Caco-2 (cell line): ENCODE measurements at regions of chr2 and their contacts with region 1.

Region 1: DNA sequence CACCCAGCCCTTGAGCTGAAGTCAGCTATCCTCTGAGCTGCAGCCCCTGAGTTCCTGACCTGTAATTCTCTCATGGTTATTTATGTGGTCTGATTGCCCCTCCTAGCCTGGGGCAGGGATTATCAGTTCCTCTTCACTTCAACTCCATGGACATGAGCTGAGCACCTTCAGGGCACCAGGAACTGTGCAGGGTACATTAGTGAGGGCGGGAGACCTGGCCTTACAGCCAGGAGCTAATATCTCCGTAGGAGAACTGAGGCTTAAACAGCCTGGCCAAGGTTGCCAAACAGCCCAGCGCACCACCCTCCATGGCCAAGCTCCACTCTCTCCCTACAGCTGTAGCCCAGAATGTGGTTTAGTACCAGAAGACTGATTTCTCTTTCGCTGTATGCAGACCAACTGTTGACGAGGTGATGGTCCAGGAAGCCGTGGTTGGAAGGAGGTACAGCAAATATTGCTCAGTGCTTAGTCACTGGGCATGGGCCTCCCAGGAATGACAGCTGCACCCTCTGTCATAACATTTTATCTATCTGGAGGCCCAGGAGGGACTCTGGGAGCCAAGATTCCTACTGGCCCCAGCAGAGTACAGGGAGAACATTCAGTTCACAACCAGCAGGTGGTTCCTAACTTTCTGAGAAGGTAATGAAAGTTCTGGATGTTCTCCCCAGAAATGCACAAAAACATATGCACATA is 228.7 kb upstream of the SIX2 start:
- DNase-seq: peak; percentile 63 to 69
- H3K4me3 ChIP-seq: no peak overlapping the region
- H3K4me3 Mint-ChIP-seq: no peak overlapping the region
- H3K27ac Mint-ChIP-seq: peak overlapping the region; percentile 57
- H3K4me1 ChIP-seq: peaks cover 13% of the 10 kb centered on the region
- H3K4me1 Mint-ChIP-seq: peaks cover 8% of the 10 kb centered on the region
- H3K27me3 ChIP-seq: no peaks in the 10 kb centered on the region
- H3K27me3 Mint-ChIP-seq: no peaks in the 10 kb centered on the region
- CTCF ChIP-seq: peak in 1 of 2 experiments; percentile 42

Region 2: DNA sequence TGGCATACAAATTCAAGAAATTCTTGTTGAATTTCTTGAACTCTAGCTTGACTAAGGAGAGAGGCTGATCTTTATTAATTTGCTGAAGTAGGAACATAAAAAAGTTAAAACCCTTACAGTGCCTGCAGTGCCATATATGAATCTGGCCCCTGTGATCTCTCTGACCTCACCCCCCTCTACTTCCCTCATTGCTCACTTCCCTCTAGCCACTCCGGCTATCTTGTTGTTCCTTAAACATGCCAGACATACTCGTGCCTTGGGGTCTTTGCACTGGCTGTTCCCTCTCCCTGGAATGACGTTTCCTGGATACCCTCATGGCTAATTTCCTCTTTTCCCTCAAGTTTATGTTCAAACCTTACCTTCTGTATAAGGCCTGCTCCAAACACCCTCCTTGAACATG is 17.6 kb after region 1 on chr2:
- CTCF ChIA-PET with region 1: no interaction called
- POLR2A ChIA-PET with region 1: no interaction called
- intact Hi-C with region 1: no loop called
- DNase-seq: no peak
- H3K4me3 ChIP-seq: no peak overlapping the region
- H3K4me3 Mint-ChIP-seq: no peak overlapping the region
- H3K27ac Mint-ChIP-seq: no peak overlapping the region
- H3K4me1 ChIP-seq: peaks cover 7% of the 10 kb centered on the region
- H3K4me1 Mint-ChIP-seq: peaks cover 5% of the 10 kb centered on the region
- H3K27me3 ChIP-seq: no peaks in the 10 kb centered on the region
- H3K27me3 Mint-ChIP-seq: no peaks in the 10 kb centered on the region
- CTCF ChIP-seq: no peak

Region 3: GRCh38 chr2:45273412-45274249 is 35.6 kb after region 1 on chr2:
- CTCF ChIA-PET with region 1: no interaction called
- POLR2A ChIA-PET with region 1: no interaction called
- intact Hi-C with region 1: loop called (anchors 1 kb)
- DNase-seq: peak; percentile 52 to 75
- H3K4me3 ChIP-seq: no peak overlapping the region
- H3K4me3 Mint-ChIP-seq: peak overlapping the region; percentile 58
- H3K27ac Mint-ChIP-seq: peak overlapping the region; percentile 56
- H3K4me1 ChIP-seq: peaks cover 53% of the 10 kb centered on the region
- H3K4me1 Mint-ChIP-seq: peaks cover 31% of the 10 kb centered on the region
- H3K27me3 ChIP-seq: no peaks in the 10 kb centered on the region
- H3K27me3 Mint-ChIP-seq: no peaks in the 10 kb centered on the region
- CTCF ChIP-seq: no peak

Region 4: DNA sequence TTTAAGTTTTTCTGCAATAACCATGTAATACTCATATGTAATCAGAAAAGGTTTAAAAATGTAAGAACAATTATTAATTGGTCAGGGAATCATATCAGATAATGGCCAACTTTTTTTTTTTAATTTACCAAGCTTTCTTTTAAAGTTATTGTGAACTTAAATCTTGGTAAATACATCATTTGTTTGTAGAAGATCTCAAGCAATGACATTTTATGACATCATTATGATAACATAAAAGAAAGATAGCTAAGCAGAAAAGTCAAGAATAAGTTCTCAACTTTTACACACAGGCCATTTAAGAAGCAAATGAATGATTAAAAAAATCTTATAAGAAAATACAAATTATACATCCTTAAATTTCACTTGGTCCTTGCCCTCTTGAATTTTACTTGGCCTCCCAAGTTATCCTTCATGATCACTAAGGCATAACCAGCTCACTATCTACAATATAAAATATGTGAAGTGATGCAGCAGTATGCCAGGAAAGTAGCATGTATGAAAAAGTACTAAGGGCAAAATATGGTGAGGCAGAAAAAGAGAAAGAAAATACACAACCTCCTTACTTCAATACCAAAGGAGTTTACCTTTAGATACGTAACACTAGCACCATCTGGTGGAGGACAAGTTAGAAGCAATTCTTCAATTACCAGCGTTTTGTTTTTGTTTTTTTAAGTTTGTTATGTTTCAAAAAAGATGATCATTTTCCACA is 256.4 kb after region 1 on chr2:
- CTCF ChIA-PET with region 1: no interaction called
- POLR2A ChIA-PET with region 1: no interaction called
- intact Hi-C with region 1: loop called (anchors 5 kb)
- DNase-seq: peak in 1 of 2 experiments; percentile 57
- H3K4me3 ChIP-seq: no peak overlapping the region
- H3K4me3 Mint-ChIP-seq: no peak overlapping the region
- H3K27ac Mint-ChIP-seq: no peak overlapping the region
- H3K4me1 ChIP-seq: no peaks in the 10 kb centered on the region
- H3K4me1 Mint-ChIP-seq: no peaks in the 10 kb centered on the region
- H3K27me3 ChIP-seq: no peaks in the 10 kb centered on the region
- H3K27me3 Mint-ChIP-seq: no peaks in the 10 kb centered on the region
- CTCF ChIP-seq: peak; percentile 72 to 81

Region 5: DNA sequence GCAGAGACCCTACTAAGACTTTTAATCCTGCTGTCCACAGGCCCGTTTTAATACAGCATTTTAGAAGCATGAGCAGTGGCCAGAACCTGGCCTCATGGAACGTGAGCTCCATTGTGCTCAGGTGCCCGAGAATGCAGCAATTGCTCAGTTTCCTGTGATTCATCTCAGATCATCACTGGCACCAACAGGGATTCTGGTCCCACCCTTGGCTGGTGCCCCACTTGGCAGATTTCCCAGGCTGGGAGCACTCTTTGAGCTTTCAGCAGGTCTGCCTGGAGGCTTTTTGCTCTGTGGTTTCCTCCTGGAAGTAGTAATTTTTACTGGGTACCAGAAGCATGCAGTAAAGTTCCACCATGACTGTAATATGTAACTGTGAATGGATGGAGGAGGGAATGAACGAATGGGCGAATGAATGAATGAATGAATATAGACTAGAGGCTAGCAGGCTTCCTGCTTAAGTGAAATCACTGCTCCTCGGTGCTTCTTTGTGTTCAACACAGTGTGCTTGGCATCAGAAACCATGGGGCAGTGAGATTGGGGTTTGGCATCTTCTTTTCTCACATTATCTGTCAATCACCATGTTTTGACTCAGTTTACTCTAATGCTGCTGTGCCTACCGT is 726.3 kb after region 1 on chr2:
- CTCF ChIA-PET with region 1: no interaction called
- POLR2A ChIA-PET with region 1: no interaction called
- intact Hi-C with region 1: no loop called
- DNase-seq: no peak
- H3K4me3 ChIP-seq: no peak overlapping the region
- H3K4me3 Mint-ChIP-seq: no peak overlapping the region
- H3K27ac Mint-ChIP-seq: no peak overlapping the region
- H3K4me1 ChIP-seq: peaks cover 32% of the 10 kb centered on the region
- H3K4me1 Mint-ChIP-seq: peaks cover 20% of the 10 kb centered on the region
- H3K27me3 ChIP-seq: no peaks in the 10 kb centered on the region; the same call in 1 of the 2 replicates
- H3K27me3 Mint-ChIP-seq: no peaks in the 10 kb centered on the region
- CTCF ChIP-seq: no peak